Kidney (tissue), 22 donors: ENCODE measurements at regions of chr6 and their contacts with region 1.

Region 1: DNA sequence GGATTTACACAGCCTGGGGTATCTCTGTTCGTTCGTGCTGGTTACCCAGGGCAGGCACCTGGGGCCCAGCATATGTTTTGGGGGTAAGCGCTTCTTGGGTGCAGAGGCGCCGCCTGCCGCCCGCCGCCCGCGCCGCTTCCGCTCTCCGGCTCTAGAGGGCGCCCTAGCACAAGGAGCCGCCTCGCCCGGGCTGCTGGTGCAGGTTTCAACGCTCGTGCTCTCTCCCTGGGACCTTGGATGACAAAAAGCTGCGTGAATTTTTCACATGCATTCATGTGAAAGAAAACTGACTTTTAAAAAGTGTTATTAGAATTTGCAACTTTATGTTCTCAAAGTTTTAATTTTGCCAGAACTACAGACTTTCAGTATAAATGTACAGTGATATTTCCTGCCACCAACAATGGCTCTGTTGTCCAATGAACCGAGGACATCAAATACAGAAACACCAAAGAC is 32.5 kb downstream of the PRR18 start:
- DNase-seq: peak; percentile 64 to 83 (median 77)
- H3K4me3 ChIP-seq: no peak overlapping the region
- H3K27ac ChIP-seq: no peak overlapping the region
- H3K4me1 ChIP-seq: no peaks in the 10 kb centered on the region
- H3K27me3 ChIP-seq: peaks cover 2% of the 10 kb centered on the region
- CTCF ChIP-seq: peak; percentile 96

Region 2: GRCh38 chr6:165834613-165835259 is 441.0 kb before region 1 on chr6:
- intact Hi-C with region 1: no loop called
- DNase-seq: no peak
- H3K4me3 ChIP-seq: no peak overlapping the region
- H3K27ac ChIP-seq: peak overlapping the region in 1 of 2 donors; percentile 58
- H3K4me1 ChIP-seq: peaks cover 3 to 21% (median 5%) of the 10 kb centered on the region in 3 donors
- H3K27me3 ChIP-seq: no peaks in the 10 kb centered on the region
- CTCF ChIP-seq: no peak

Region 3: GRCh38 chr6:166402582-166403277 is 127.0 kb after region 1 on chr6:
- intact Hi-C with region 1: loop called (anchors 10 kb)
- DNase-seq: no peak
- H3K4me3 ChIP-seq: no peak overlapping the region
- H3K27ac ChIP-seq: no peak overlapping the region
- H3K4me1 ChIP-seq: peaks cover 0 to 4% (median 2%) of the 10 kb centered on the region in 3 donors
- H3K27me3 ChIP-seq: no peaks in the 10 kb centered on the region
- CTCF ChIP-seq: no peak